Activated naive CD8-positive, alpha-beta T cell treated with anti-CD3 and anti-CD28 coated beads, Interleukin-2, amount 10 ng/mL, durations not matched to agents 7 days and 5 days (primary cell): ENCODE measurements at regions of chr6 and their contacts with region 1.

Region 1: GRCh38 chr6:26122793-26123674 is 35.8 kb downstream of the HFE start:
- DNase-seq: peak; percentile 76
- ATAC-seq: peak; percentile 58
- H3K4me3 Mint-ChIP-seq: peak overlapping the region; percentile 99
- H3K27ac Mint-ChIP-seq: peak overlapping the region; percentile 100
- H3K4me1 Mint-ChIP-seq: peaks cover 40% of the 10 kb centered on the region
- H3K27me3 Mint-ChIP-seq: no peaks in the 10 kb centered on the region

Region 2: GRCh38 chr6:26045065-26045927 is 77.7 kb before region 1 on chr6:
- POLR2A ChIA-PET with region 1: interaction called, 170 read pairs
- DNase-seq: peak; percentile 82
- ATAC-seq: peak; percentile 56
- H3K4me3 Mint-ChIP-seq: peak overlapping the region; percentile 86
- H3K27ac Mint-ChIP-seq: peak overlapping the region; percentile 99
- H3K4me1 Mint-ChIP-seq: peaks cover 41% of the 10 kb centered on the region
- H3K27me3 Mint-ChIP-seq: no peaks in the 10 kb centered on the region

Region 3: GRCh38 chr6:26103770-26104456 is 19.1 kb before region 1 on chr6:
- POLR2A ChIA-PET with region 1: interaction called, 252 read pairs
- DNase-seq: peak; percentile 86
- ATAC-seq: peak; percentile 89
- H3K4me3 Mint-ChIP-seq: peak overlapping the region; percentile 93
- H3K27ac Mint-ChIP-seq: peak overlapping the region; percentile 100
- H3K4me1 Mint-ChIP-seq: peaks cover 18% of the 10 kb centered on the region
- H3K27me3 Mint-ChIP-seq: no peaks in the 10 kb centered on the region

Region 4: DNA sequence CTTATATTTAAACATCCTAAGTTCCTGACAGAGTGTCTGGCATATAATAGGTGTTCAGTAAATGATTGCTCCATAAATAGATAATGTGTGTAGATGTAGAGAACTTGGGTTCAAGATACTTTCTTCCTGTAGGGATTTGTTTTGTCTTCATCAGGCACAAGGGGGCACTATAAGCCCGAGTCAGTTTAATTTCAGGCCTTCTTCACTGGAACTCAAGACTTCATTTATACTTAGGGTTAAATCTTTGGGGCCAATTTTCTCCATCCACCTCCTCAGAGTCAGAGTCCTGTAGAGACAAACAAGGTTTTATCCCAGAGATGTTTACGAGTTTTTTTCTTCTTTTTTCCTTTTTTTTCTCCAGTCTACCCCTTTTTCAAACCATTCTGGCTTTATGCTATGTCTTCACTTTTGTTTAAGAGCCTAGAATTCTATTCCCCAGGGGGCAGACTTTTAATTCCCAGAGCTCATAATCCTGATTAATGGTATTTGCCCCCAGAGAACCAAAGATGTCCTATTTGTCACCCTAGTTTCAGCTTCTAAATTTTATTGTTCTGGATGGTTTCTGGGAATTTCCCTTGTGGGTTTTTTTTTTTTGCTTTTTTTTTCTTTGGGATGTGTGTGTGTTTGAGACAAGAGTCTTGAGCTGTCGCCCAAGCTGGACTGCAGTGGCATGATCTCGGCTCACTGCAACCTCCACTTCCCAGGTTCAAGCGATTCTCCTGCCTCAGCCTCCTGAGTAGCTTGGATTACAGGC is 52.6 kb after region 1 on chr6:
- POLR2A ChIA-PET with region 1: interaction called, 263 read pairs
- DNase-seq: no peak
- ATAC-seq: no peak
- H3K4me3 Mint-ChIP-seq: peak overlapping the region; percentile 54
- H3K27ac Mint-ChIP-seq: peak overlapping the region; percentile 76
- H3K4me1 Mint-ChIP-seq: peaks cover 41% of the 10 kb centered on the region
- H3K27me3 Mint-ChIP-seq: no peaks in the 10 kb centered on the region

Region 5: GRCh38 chr6:26223650-26224546 is 100.9 kb after region 1 on chr6:
- POLR2A ChIA-PET with region 1: interaction called, 33 read pairs
- DNase-seq: peak; percentile 59
- ATAC-seq: peak; percentile 77
- H3K4me3 Mint-ChIP-seq: no peak overlapping the region
- H3K27ac Mint-ChIP-seq: no peak overlapping the region
- H3K4me1 Mint-ChIP-seq: peaks cover 29% of the 10 kb centered on the region
- H3K27me3 Mint-ChIP-seq: no peaks in the 10 kb centered on the region

Region 6: GRCh38 chr6:27132532-27133280 is 1009.7 kb after region 1 on chr6:
- POLR2A ChIA-PET with region 1: interaction called, 25 read pairs
- DNase-seq: peak; percentile 90
- ATAC-seq: peak; percentile 76
- H3K4me3 Mint-ChIP-seq: no peak overlapping the region
- H3K27ac Mint-ChIP-seq: no peak overlapping the region
- H3K4me1 Mint-ChIP-seq: peaks cover 46% of the 10 kb centered on the region
- H3K27me3 Mint-ChIP-seq: no peaks in the 10 kb centered on the region

Region 7: DNA sequence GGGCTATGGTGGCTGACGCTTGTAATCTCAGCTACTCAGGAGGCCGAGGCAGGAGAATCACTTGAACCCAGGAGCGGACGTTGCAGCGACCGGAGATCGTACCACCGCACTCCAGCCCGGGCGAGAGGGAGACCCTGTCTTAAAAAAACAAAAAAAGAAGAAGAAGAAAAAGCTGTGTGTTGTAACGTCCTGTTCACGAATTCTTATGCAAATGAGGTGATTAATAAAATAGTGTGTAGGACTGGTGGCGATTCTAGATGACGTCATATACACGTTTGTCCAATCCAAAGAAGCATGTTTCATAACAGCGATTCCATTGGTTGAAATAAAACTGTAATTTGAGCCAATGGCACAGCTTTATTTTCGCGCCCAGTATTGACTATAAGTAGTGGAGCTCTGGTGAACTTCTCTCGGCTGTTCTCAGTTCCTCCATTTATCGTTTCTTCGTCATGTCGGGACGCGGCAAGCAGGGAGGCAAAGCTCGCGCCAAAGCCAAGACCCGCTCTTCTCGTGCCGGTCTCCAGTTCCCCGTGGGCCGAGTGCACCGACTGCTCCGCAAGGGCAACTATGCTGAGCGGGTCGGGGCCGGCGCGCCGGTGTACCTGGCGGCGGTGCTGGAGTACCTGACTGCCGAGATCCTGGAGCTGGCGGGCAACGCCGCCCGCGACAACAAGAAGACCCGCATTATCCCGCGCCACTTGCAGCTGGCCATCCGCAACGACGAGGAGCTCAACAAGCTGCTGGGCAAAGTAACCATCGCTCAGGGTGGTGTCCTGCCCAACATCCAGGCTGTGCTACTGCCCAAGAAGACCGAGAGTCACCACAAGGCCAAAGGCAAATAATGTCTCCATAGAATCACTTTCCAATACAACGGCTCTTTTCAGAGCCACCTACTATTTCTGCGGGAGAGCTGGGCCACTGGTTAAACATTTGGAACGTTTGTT is 1742.1 kb after region 1 on chr6:
- POLR2A ChIA-PET with region 1: interaction called, 42 read pairs
- DNase-seq: peak; percentile 83
- ATAC-seq: peak; percentile 56
- H3K4me3 Mint-ChIP-seq: peak overlapping the region; percentile 99
- H3K27ac Mint-ChIP-seq: peak overlapping the region; percentile 100
- H3K4me1 Mint-ChIP-seq: peaks cover 57% of the 10 kb centered on the region
- H3K27me3 Mint-ChIP-seq: no peaks in the 10 kb centered on the region